AG04449 (cell line): ENCODE measurements at regions of chr17 and their contacts with region 1.

Region 1: GRCh38 chr17:6435968-6436367 is 1.0 kb upstream of the AIPL1 start:
- DNase-seq: no peak
- H3K4me3 ChIP-seq: no peak overlapping the region
- CTCF ChIP-seq: peak; percentile 87

Region 2: DNA sequence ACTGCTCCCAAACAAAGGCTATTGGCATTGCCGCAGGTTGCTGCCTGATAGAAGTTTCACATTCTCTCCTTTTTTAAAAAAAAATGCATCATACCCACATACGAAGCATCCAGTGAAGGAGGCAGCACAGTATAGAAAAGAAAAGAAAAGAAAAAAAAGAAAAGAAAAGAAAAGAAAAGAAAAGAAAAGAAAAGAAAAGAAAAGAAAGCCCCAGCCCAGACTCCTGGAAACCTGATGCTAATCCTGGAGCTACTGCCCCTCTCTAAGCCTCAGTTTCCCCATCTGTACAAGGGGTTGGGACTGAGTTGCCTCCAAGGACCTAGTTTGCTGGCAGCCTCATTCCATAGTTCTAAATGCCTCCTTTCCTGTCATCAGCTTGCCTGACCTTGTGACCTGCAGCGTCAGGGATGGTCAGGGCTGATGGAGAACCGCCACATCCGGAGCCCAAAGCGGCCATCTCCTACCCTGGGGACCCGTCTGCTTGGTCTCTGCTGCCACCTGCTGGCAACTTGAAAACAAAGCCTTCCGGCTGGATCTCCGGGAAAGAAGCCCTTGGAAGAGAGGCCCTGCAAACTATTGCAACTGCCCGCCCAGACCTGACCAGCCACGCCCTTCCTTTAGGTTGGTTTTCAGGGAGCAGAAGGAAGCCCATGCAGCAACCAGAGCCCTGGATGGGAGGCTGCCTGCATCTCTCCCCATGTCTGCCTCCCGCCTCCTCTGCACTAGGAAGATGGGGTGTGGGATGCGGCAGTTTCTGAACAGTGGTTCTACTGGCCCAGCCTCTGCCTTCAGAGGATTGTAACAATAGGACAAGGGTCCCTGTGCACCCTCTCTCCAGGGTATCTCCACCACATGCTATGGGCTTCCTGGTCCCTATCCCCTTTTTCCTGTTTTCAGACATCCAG is 14.0 kb before region 1 on chr17:
- CTCF ChIA-PET with region 1: interaction called, 41 read pairs
- POLR2A ChIA-PET with region 1: no interaction called
- DNase-seq: no peak
- H3K4me3 ChIP-seq: no peak overlapping the region
- CTCF ChIP-seq: peak; percentile 85